WTC11 (cell line): ENCODE measurements at regions of chr1 and their contacts with region 1.

Region 1: DNA sequence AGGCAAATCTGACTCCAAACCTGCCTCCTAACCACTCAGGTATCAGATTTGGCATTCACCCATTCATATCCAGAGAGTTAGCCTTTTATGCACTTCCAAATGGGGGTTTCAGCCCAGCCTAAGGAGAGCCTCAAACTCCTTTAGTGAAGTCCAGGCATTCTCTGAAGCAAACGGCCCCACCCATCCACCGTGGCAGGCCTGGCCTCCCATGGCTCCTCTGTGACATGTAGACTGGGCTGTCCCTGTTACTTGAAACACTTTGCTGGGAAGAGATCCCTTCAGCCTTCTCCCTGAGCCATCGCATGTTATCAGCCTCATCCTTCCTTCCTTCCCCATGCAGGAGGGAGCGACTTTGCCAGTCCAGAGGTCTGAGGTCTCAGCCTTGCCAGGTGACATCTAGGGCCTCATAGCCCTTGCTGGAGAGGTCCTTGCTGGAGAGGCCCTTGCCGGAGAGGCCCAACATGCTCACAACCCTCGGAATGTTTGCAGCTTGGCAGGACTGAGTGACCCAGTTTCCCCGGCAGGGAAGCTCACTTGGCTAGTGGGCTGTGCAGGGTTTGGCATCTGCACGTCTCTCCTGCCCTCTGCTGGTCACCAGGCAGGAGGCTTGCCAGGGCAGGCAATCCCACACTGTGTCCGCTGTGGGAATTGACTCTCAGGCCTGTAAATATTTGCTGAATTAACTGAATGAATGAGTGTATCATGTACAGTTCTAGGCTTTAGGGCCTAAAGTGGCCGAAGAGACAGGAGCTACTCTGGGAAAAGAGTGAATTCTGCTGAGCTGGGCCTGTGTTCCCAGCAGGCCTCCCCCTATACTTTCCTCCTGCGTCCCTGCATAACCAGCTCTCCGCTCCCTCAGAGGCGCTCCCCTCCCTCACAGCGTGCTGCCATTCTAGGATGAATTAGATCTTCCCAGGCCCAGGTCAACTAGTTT is 26.7 kb upstream of the RBM15 start:
- DNase-seq: peak; percentile 80
- ATAC-seq: peak; percentile 96
- H3K4me3 Mint-ChIP-seq: peak overlapping the region; percentile 54
- H3K27ac Mint-ChIP-seq: no peak overlapping the region; the same call in 1 of the 2 replicates
- H3K4me1 Mint-ChIP-seq: peaks cover 24% of the 10 kb centered on the region
- H3K27me3 Mint-ChIP-seq: no peaks in the 10 kb centered on the region
- CTCF ChIP-seq: peak; percentile 77

Region 2: DNA sequence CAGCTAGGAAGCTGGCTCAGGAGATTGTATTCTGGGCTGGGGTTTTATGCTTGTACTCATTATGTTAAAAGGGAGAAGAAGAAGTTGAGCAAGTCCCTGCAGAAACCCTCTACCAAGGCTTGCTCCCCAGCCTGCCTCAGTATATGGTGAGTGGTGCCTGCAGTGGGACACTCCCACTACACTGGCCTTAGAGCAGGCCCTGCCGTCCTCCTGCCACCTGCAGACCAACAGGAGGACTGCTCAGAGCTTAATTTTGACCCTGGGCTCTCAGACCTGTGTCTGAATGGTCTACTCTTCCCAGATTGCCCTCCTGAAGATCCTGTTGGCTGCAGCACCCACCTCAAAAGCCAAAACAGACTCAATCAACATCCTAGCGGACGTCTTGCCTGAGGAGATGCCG is 265.0 kb before region 1 on chr1:
- CTCF ChIA-PET with region 1: no interaction called
- POLR2A ChIA-PET with region 1: no interaction called
- DNase-seq: no peak
- ATAC-seq: peak; percentile 74
- H3K4me3 Mint-ChIP-seq: no peak overlapping the region
- H3K27ac Mint-ChIP-seq: no peak overlapping the region
- H3K4me1 Mint-ChIP-seq: no peaks in the 10 kb centered on the region
- H3K27me3 Mint-ChIP-seq: no peaks in the 10 kb centered on the region
- CTCF ChIP-seq: no peak

Region 3: GRCh38 chr1:110196917-110197765 is 115.3 kb before region 1 on chr1:
- CTCF ChIA-PET with region 1: interaction called, 77 read pairs
- POLR2A ChIA-PET with region 1: no interaction called
- DNase-seq: peak; percentile 42
- ATAC-seq: peak; percentile 95
- H3K4me3 Mint-ChIP-seq: no peak overlapping the region
- H3K27ac Mint-ChIP-seq: no peak overlapping the region
- H3K4me1 Mint-ChIP-seq: peaks cover 2% of the 10 kb centered on the region; the same call in 1 of the 2 replicates
- H3K27me3 Mint-ChIP-seq: no peaks in the 10 kb centered on the region
- CTCF ChIP-seq: peak; percentile 87

Region 4: DNA sequence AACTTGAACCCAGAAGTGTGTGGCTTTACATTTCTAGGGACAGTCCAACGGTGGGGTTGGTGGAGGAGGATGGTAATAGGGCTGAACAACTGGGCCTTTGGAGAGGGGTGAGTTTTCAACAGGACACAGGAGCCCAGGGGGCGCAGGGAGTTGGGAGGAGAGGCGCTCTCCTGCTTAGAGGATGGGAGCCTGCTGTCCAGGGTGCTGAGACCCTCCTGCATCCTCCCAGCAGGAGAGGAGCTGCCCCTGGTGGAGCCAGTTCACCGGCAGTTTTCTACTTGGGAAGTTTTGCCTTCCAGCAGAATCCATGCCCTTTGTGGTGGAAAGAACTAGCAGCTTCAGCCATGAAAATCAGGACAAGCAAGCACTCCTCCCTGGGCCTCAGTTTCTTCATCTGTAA is 93.7 kb before region 1 on chr1:
- CTCF ChIA-PET with region 1: interaction called, 759 read pairs
- POLR2A ChIA-PET with region 1: no interaction called
- DNase-seq: no peak
- ATAC-seq: peak; percentile 60
- H3K4me3 Mint-ChIP-seq: no peak overlapping the region
- H3K27ac Mint-ChIP-seq: no peak overlapping the region
- H3K4me1 Mint-ChIP-seq: peaks cover 16% of the 10 kb centered on the region
- H3K27me3 Mint-ChIP-seq: no peaks in the 10 kb centered on the region
- CTCF ChIP-seq: no peak

Region 5: DNA sequence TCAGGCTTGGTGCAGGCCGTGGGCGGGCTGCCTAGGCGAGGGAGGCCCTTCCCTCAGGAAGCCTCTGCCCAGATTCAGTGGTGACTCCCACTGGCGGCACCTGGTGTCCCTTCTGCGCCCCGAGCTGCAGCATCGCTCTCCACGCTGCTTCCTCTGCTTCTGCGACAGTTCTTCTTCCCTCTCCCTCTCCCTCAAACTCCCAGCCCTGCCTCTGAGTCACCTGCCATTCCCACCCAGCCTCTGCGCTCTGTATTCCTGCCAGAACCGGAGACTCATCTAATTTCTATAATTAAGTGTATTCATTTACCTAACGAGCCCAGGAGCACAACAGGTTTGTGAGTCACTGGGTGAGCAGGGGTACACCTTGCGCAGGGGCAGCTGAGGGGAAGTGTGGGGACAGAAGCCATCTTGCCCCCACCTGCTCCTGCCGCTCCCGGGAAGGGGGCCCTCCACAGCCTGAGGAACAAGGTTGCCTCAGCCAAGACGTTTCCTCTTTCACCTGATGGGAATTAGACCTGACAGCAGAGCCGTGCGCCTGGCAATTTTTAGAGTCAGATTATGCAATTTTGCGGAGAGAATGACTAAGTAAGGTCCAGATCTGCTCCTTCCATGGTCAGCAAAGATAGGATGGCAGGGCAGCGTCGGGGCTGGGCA is 83.0 kb before region 1 on chr1:
- CTCF ChIA-PET with region 1: interaction called, 15 read pairs
- POLR2A ChIA-PET with region 1: no interaction called
- DNase-seq: no peak
- ATAC-seq: peak; percentile 59
- H3K4me3 Mint-ChIP-seq: no peak overlapping the region
- H3K27ac Mint-ChIP-seq: peak overlapping the region; percentile 66
- H3K4me1 Mint-ChIP-seq: peaks cover 4% of the 10 kb centered on the region
- H3K27me3 Mint-ChIP-seq: no peaks in the 10 kb centered on the region
- CTCF ChIP-seq: no peak

Region 6: DNA sequence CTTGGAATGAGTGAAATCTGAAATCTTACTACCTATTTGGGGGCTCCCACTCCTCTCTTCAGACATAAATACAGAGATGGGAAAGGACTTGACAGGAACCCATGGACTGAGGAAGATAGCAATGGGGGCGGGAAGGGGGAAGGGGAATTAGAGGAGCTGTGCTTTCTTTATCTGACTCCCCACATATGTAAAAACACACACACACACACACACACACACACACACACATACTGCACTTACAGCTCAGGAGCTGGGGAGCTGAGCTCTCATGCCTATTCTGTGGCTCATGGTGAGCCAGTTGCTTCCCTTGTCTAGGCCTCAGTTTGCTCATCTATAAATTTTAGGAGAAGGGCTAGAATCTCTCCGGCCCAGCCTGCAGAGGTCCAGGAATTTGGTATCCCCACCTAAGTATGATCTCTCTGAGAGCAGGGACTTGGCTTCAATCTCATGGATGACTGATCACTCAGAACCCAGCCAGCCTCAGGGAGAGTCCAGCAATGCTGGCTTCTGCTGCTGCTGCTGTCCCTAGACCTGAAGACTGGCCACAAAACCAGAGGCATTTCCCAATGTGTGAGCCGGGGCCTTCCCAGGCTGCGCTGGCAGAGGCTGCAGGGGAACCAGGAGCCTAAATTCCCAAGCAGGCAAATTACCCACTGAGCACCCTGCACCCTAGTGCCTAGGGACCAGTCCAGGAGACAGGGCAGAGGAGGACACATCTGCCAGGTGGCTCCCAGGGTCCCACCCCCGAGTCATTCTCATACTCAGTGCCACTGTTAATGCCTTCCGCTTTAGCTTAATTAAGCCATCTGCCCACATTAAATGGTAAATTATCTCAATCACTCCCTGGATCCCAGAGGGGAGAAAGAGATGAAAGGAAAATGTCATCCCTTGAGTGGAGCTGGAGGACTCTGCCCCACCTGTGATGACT is 30.8 kb before region 1 on chr1:
- CTCF ChIA-PET with region 1: interaction called, 38 read pairs
- POLR2A ChIA-PET with region 1: interaction called, 3 read pairs
- DNase-seq: no peak
- ATAC-seq: no peak
- H3K4me3 Mint-ChIP-seq: no peak overlapping the region
- H3K27ac Mint-ChIP-seq: no peak overlapping the region
- H3K4me1 Mint-ChIP-seq: peaks cover 3% of the 10 kb centered on the region; the same call in 1 of the 2 replicates
- H3K27me3 Mint-ChIP-seq: peaks cover 2% of the 10 kb centered on the region
- CTCF ChIP-seq: no peak

Region 7: GRCh38 chr1:110298991-110299390 is 13.5 kb before region 1 on chr1:
- CTCF ChIA-PET with region 1: interaction called, 34 read pairs
- POLR2A ChIA-PET with region 1: no interaction called
- DNase-seq: no peak
- ATAC-seq: no peak
- H3K4me3 Mint-ChIP-seq: no peak overlapping the region
- H3K27ac Mint-ChIP-seq: no peak overlapping the region
- H3K4me1 Mint-ChIP-seq: 0 out of 2 replicates have a peak, but pooled peaks cover 2% of the 10 kb centered on the region
- H3K27me3 Mint-ChIP-seq: peaks cover 5% of the 10 kb centered on the region
- CTCF ChIP-seq: no peak

Region 8: GRCh38 chr1:110338886-110339406 is 26.5 kb after region 1 on chr1 and contains the start of gene RBM15:
- CTCF ChIA-PET with region 1: interaction called, 51 read pairs
- POLR2A ChIA-PET with region 1: interaction called, 14 read pairs
- DNase-seq: peak; percentile 96
- ATAC-seq: peak; percentile 84
- H3K4me3 Mint-ChIP-seq: no peak within 1 kb of the TSS
- H3K27ac Mint-ChIP-seq: no peak within 1 kb of the TSS; the same call in 1 of the 2 replicates
- H3K4me1 Mint-ChIP-seq: peaks cover 52% of the 10 kb centered on the region
- H3K27me3 Mint-ChIP-seq: no peaks in the 10 kb centered on the region
- CTCF ChIP-seq: no peak
- total RNA-seq, gene RBM15: 43.5 to 50.6 TPM (median 44.8 TPM) in 3 replicates